ENCODE measurements at regions of chr11 and their contacts with region 1.

Region 1: DNA sequence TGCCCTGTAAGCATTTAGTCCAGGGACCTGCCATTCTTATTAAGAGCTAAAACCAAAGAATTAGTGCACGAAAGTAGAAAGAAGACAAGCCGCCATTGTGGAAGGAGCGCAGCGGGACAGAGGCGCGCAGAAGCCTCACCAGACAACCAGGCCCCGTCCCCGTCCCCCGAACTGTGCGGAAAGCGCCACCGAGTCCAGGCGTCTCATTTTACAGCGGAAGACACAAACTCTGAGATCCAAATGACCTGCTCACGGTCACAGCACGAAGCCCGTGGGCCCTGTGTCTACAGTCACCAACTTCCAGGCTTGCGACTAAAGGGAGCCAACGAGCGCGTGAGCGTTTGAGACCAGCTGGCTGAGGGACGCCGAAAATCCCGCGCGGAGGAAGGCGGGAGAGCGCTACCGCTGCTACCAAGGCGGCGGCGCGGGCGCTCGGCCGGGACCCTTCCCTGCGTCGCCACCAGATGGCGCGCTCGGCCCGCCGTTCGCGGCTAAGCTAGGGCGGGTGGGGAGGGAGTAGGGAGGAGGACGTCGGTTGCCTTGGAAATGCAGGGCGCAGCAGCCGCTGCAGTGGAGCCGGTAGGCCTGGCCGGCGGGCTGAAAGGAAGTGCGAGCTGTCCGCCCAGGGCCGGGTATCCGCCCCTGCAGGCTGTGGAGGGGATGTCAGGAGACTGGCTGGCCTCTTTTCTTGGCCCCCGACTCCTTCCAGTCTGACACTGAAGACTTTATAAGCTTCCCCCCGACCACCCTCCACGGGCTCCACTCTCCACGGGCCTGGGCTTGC is 434 bp upstream of the CCDC83 start:
- DNase-seq: peak; percentile 86 to 96 (median 89)
- ATAC-seq: peak; percentile 97
- H3K4me3 ChIP-seq: peak overlapping the region; percentile 64 to 72
- H3K4me3 Mint-ChIP-seq: peak overlapping the region; percentile 88
- H3K27ac ChIP-seq: peak overlapping the region; percentile 75 to 77
- H3K27ac Mint-ChIP-seq: peak overlapping the region; percentile 91
- H3K4me1 ChIP-seq: peaks cover 6% of the 10 kb centered on the region
- H3K4me1 Mint-ChIP-seq: peaks cover 8% of the 10 kb centered on the region
- H3K27me3 ChIP-seq: no peaks in the 10 kb centered on the region
- H3K27me3 Mint-ChIP-seq: no peaks in the 10 kb centered on the region
- CTCF ChIP-seq: peak; percentile 84

Region 2: GRCh38 chr11:85595285-85595884 is 259.4 kb before region 1 on chr11:
- CTCF ChIA-PET with region 1: interaction called, 6 read pairs
- POLR2A ChIA-PET with region 1: interaction called, 3 read pairs
- intact Hi-C with region 1: loop called (anchors 1 to 2 kb)
- DNase-seq: peak in 2 of 9 experiments; percentile 62 to 72
- ATAC-seq: peak; percentile 58
- H3K4me3 ChIP-seq: no peak overlapping the region
- H3K4me3 Mint-ChIP-seq: no peak overlapping the region
- H3K27ac ChIP-seq: no peak overlapping the region
- H3K27ac Mint-ChIP-seq: no peak overlapping the region
- H3K4me1 ChIP-seq: no peaks in the 10 kb centered on the region
- H3K4me1 Mint-ChIP-seq: no peaks in the 10 kb centered on the region
- H3K27me3 ChIP-seq: no peaks in the 10 kb centered on the region
- H3K27me3 Mint-ChIP-seq: peaks cover 2% of the 10 kb centered on the region
- CTCF ChIP-seq: peak; percentile 91

Region 3: DNA sequence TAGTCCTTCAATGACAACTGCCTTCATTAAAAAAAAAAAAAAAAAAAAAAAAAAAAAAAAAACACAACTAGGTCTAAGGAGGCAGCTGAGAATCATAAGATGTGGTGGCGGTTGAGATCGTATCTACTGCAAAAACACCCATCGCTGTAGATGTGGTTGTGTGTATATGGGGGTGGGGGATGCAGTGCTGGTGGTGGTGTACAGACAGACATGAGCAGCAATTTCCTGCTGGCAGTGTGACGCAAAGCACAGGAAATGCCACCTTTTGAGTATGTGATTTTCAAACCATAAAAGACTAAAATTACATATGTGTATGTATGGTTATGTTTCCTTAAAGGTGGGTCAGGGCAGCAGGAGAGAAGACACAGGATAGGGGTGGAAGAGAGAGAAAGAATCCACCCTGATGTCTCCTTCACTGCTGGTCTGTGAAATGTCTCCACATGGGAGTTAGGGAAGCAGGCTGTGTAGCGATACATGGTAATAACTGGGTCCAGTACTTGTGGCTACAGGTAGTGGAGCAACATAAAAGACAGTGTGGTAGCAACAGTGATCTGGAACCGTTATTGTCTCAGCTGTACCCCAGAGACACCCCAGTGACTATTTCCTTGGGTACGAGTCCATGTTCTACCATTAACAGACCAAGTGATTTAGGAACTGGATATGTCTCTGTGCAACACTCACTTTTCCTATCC is 101.7 kb before region 1 on chr11:
- CTCF ChIA-PET with region 1: interaction called, 4 read pairs
- POLR2A ChIA-PET with region 1: interaction called, 4 read pairs
- intact Hi-C with region 1: loop called in 1 of 2 experiments (anchors 1 kb)
- DNase-seq: peak; percentile 73 to 99 (median 87)
- ATAC-seq: peak; percentile 80
- H3K4me3 ChIP-seq: peak overlapping the region in 1 of 2 experiments; percentile 9
- H3K4me3 Mint-ChIP-seq: peak overlapping the region; percentile 74
- H3K27ac ChIP-seq: peak overlapping the region; percentile 47 to 83
- H3K27ac Mint-ChIP-seq: peak overlapping the region; percentile 95
- H3K4me1 ChIP-seq: peaks cover 84% of the 10 kb centered on the region
- H3K4me1 Mint-ChIP-seq: peaks cover 93% of the 10 kb centered on the region
- H3K27me3 ChIP-seq: no peaks in the 10 kb centered on the region
- H3K27me3 Mint-ChIP-seq: no peaks in the 10 kb centered on the region
- CTCF ChIP-seq: no peak

Region 4: GRCh38 chr11:85844426-85845129 is 10.2 kb before region 1 on chr11:
- CTCF ChIA-PET with region 1: interaction called, 10 read pairs
- POLR2A ChIA-PET with region 1: interaction called, 3 read pairs
- intact Hi-C with region 1: no loop called
- DNase-seq: no peak
- ATAC-seq: no peak
- H3K4me3 ChIP-seq: no peak overlapping the region
- H3K4me3 Mint-ChIP-seq: no peak overlapping the region
- H3K27ac ChIP-seq: no peak overlapping the region
- H3K27ac Mint-ChIP-seq: no peak overlapping the region
- H3K4me1 ChIP-seq: no peaks in the 10 kb centered on the region
- H3K4me1 Mint-ChIP-seq: no peaks in the 10 kb centered on the region
- H3K27me3 ChIP-seq: no peaks in the 10 kb centered on the region
- H3K27me3 Mint-ChIP-seq: no peaks in the 10 kb centered on the region
- CTCF ChIP-seq: no peak

Region 5: GRCh38 chr11:85983762-85984161 is 129.0 kb after region 1 on chr11:
- CTCF ChIA-PET with region 1: no interaction called
- POLR2A ChIA-PET with region 1: no interaction called
- intact Hi-C with region 1: loop called (anchors 5 to 10 kb)
- DNase-seq: no peak
- ATAC-seq: no peak
- H3K4me3 ChIP-seq: no peak overlapping the region
- H3K4me3 Mint-ChIP-seq: no peak overlapping the region
- H3K27ac ChIP-seq: no peak overlapping the region
- H3K27ac Mint-ChIP-seq: no peak overlapping the region
- H3K4me1 ChIP-seq: no peaks in the 10 kb centered on the region
- H3K4me1 Mint-ChIP-seq: peaks cover 11% of the 10 kb centered on the region
- H3K27me3 ChIP-seq: no peaks in the 10 kb centered on the region
- H3K27me3 Mint-ChIP-seq: no peaks in the 10 kb centered on the region
- CTCF ChIP-seq: no peak

Region 6: GRCh38 chr11:86116386-86116726 is 261.6 kb after region 1 on chr11:
- CTCF ChIA-PET with region 1: no interaction called
- POLR2A ChIA-PET with region 1: no interaction called
- intact Hi-C with region 1: no loop called
- DNase-seq: peak in 4 of 9 experiments; percentile 18 to 73 (median 42)
- ATAC-seq: peak; percentile 70
- H3K4me3 ChIP-seq: no peak overlapping the region
- H3K4me3 Mint-ChIP-seq: no peak overlapping the region
- H3K27ac ChIP-seq: no peak overlapping the region
- H3K27ac Mint-ChIP-seq: no peak overlapping the region
- H3K4me1 ChIP-seq: no peaks in the 10 kb centered on the region
- H3K4me1 Mint-ChIP-seq: peaks cover 12% of the 10 kb centered on the region
- H3K27me3 ChIP-seq: no peaks in the 10 kb centered on the region
- H3K27me3 Mint-ChIP-seq: no peaks in the 10 kb centered on the region
- CTCF ChIP-seq: no peak

Region 7: DNA sequence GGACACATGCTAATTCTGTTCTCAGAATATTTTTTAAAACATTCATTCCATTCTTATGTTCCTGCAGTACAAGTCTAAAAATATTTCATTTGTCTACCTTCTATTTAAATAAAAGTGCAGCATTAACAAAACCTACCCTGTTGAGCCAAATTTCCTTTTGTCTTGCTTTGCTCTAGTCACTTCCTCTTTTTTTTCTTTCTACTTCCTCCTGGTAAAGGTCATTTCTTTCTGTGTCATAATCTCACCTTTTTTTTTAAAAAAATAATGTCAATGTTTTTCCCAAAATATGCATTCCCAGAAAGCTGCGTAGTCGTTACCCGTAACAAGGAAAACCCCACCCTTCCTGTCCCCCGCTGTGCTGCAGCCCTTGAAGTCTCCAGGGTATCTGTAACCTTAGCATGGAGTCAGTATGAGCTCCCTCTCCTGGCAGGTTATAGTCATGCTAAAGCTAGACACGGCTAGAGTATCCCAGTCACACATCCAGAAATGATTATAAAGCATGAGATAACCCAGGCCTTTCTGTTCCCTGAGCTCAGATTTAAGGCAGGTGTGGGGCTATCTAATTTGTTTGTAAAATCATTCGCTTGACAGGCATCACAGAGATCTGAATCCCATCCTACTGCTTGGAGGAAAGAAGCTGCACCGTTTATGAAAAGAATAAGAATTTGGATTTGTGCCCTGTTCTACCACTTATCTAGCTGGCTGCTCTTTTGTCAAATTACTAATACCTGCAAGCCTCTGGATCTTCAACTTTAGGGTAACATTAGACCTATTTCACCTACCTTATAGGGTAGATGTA is 338.7 kb after region 1 on chr11:
- CTCF ChIA-PET with region 1: interaction called, 10 read pairs
- POLR2A ChIA-PET with region 1: no interaction called
- intact Hi-C with region 1: loop called (anchors 1 kb)
- DNase-seq: peak; percentile 26 to 86 (median 59)
- ATAC-seq: peak; percentile 100
- H3K4me3 ChIP-seq: peak overlapping the region; percentile 37 to 54
- H3K4me3 Mint-ChIP-seq: peak overlapping the region; percentile 83
- H3K27ac ChIP-seq: peak overlapping the region in 1 of 2 experiments; percentile 60
- H3K27ac Mint-ChIP-seq: peak overlapping the region; percentile 73
- H3K4me1 ChIP-seq: peaks cover 6% of the 10 kb centered on the region
- H3K4me1 Mint-ChIP-seq: peaks cover 15% of the 10 kb centered on the region
- H3K27me3 ChIP-seq: no peaks in the 10 kb centered on the region
- H3K27me3 Mint-ChIP-seq: no peaks in the 10 kb centered on the region
- CTCF ChIP-seq: peak; percentile 80

Region 8: DNA sequence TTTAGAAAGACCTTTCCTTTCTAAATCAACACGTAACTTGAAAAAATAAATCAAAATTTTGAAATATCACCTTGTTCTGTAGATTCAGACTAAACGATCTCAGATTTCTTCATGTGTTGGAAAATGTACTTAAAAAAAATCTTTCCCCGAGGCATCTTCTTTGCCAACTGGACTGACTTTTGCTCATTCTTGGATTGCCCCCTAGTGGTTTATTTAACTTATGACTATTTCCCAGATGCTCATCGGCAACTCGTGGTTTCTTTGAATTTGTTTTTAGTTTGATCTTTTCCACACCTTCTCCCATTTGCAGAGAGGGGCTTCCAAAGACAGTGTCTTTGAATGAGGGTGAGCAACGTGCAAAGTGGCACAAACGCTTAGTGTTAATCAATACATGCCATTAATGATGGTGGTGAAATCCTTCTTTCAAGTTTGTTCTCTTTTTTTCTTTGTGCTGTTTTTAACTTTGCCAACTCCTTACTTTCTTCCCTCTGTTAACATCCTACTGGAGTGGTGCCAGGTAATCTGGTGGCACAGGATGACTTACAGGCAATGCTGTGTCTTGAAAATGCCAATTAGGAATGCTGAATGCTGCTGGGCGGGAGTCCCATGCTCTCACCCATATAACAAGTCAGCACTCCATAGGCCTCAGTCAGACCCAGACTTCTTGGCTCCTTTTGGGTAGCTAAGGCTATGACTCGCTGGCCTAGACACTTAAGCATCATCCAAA is 963.9 kb after region 1 on chr11:
- CTCF ChIA-PET with region 1: interaction called, 3 read pairs
- POLR2A ChIA-PET with region 1: no interaction called
- intact Hi-C with region 1: loop called in 1 of 2 experiments (anchors 5 kb)
- DNase-seq: peak in 2 of 9 experiments; percentile 57 to 69
- ATAC-seq: no peak
- H3K4me3 ChIP-seq: no peak overlapping the region
- H3K4me3 Mint-ChIP-seq: no peak overlapping the region
- H3K27ac ChIP-seq: no peak overlapping the region
- H3K27ac Mint-ChIP-seq: no peak overlapping the region
- H3K4me1 ChIP-seq: no peaks in the 10 kb centered on the region
- H3K4me1 Mint-ChIP-seq: peaks cover 3% of the 10 kb centered on the region
- H3K27me3 ChIP-seq: no peaks in the 10 kb centered on the region
- H3K27me3 Mint-ChIP-seq: peaks cover 14% of the 10 kb centered on the region
- CTCF ChIP-seq: peak; percentile 74

Measured in CD8-positive, alpha-beta T cell (primary cell).